Activated B cell treated with CpG ODN at 0.5 μM for 24 hours (primary cell): ENCODE measurements at regions of chr14 and their contacts with region 1.

Region 1: GRCh38 chr14:96741151-96741977 is 55.8 kb upstream of the VRK1 start:
- DNase-seq: peak; percentile 68
- ATAC-seq: peak; percentile 91
- H3K4me3 Mint-ChIP-seq: peak overlapping the region; percentile 65
- H3K27ac Mint-ChIP-seq: no peak overlapping the region
- H3K4me1 Mint-ChIP-seq: peaks cover 11% of the 10 kb centered on the region
- H3K27me3 Mint-ChIP-seq: peaks cover 60% of the 10 kb centered on the region
- CTCF ChIP-seq: peak; percentile 95

Region 2: DNA sequence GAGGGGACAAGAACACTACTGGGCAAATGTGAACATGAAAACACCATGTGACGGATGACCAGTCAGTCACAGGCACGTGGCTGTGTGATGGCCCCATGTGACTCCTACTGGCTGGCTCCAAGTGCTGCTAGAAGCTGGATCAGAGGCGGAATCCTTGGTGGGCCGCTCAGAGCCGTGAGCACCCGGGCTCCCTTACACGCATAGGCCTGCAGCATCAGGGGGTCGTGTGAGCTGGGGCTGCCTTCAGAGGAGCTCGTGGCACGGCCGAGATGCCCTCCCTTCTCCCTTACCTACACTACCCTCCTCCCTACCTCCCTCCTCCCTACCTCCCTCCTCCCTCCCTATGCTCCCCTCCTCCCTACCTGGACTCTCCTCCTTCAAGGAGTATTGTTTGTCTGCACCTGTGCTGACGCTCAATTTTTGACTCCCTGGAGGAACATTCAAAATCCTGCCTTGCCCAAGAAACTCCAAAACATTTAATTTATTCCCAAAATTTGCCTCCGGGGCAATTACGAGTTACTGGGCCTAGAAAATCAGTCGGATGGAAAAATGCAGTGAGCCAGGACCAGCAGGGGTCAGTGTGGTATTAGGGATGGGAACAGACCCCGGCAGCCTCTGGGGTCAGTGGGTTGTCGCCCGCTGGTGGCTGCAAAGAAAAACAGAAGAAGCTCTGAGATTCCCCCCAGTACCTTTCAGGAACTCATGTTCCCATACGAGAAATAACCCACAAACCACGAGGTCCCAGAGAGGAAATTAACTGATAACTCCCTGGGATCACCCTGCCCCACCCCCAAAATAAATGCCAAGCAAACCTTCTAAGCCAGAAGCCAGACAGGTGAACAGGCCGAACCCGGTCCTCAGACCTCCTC is 641.0 kb before region 1 on chr14:
- CTCF ChIA-PET with region 1: no interaction called
- POLR2A ChIA-PET with region 1: no interaction called
- intact Hi-C with region 1: loop called (anchors 5 kb)
- DNase-seq: no peak
- ATAC-seq: no peak
- H3K4me3 Mint-ChIP-seq: no peak overlapping the region
- H3K27ac Mint-ChIP-seq: no peak overlapping the region
- H3K4me1 Mint-ChIP-seq: peaks cover 2% of the 10 kb centered on the region
- H3K27me3 Mint-ChIP-seq: no peaks in the 10 kb centered on the region
- CTCF ChIP-seq: no peak

Region 3: DNA sequence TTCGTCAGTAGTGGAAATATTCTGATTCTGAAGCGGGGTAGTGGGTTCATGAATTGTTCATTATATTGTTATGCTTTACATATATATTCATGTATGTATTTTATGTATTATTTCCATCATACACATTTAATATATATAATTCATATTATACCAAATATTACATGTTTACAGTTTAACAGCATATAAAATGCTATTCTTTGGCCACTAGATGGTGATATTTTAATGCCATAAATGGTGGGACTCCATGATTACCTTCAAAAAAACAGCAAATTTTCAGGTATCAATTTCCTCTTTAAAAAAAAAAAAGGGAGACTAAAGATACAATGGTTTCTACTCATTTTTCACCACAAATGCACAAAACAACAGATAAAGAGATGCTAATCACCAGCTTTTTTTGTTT is 444.4 kb before region 1 on chr14:
- CTCF ChIA-PET with region 1: interaction called, 4 read pairs
- POLR2A ChIA-PET with region 1: no interaction called
- intact Hi-C with region 1: loop called (anchors 5 kb)
- DNase-seq: no peak
- ATAC-seq: no peak
- H3K4me3 Mint-ChIP-seq: no peak overlapping the region
- H3K27ac Mint-ChIP-seq: no peak overlapping the region
- H3K4me1 Mint-ChIP-seq: no peaks in the 10 kb centered on the region
- H3K27me3 Mint-ChIP-seq: no peaks in the 10 kb centered on the region
- CTCF ChIP-seq: no peak

Region 4: DNA sequence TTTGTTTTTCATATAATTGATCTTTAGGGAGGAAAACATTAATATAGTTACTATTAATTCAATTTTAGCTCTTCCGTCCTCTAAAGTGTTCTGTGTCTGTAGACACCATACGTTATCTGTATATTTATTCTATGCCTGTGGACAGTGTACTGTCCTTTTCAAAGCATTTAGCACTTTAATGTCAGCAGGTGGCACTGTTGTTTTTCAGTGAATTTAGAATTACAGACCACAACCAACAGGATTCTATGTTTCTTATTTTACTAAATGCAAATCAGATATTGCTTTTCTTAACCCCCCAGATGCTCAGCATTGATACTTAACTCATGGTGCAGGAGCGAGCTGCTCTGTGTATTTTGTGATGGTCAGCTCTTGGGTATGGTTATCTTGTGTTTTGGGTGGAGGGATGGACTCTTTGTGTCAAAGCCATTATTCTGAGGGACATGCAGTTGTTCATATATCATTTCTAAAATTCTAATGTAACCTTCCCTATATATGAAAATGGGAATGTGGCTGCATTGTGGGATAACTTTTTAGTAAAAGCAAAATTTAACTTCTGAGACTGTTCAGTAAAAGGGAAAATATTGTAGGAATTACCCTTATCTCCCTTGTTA is 174.0 kb before region 1 on chr14:
- CTCF ChIA-PET with region 1: interaction called, 27 read pairs
- POLR2A ChIA-PET with region 1: no interaction called
- intact Hi-C with region 1: loop called (anchors 1 kb)
- DNase-seq: no peak
- ATAC-seq: peak; percentile 42
- H3K4me3 Mint-ChIP-seq: no peak overlapping the region
- H3K27ac Mint-ChIP-seq: no peak overlapping the region
- H3K4me1 Mint-ChIP-seq: peaks cover 3% of the 10 kb centered on the region
- H3K27me3 Mint-ChIP-seq: no peaks in the 10 kb centered on the region
- CTCF ChIP-seq: no peak

Region 5: DNA sequence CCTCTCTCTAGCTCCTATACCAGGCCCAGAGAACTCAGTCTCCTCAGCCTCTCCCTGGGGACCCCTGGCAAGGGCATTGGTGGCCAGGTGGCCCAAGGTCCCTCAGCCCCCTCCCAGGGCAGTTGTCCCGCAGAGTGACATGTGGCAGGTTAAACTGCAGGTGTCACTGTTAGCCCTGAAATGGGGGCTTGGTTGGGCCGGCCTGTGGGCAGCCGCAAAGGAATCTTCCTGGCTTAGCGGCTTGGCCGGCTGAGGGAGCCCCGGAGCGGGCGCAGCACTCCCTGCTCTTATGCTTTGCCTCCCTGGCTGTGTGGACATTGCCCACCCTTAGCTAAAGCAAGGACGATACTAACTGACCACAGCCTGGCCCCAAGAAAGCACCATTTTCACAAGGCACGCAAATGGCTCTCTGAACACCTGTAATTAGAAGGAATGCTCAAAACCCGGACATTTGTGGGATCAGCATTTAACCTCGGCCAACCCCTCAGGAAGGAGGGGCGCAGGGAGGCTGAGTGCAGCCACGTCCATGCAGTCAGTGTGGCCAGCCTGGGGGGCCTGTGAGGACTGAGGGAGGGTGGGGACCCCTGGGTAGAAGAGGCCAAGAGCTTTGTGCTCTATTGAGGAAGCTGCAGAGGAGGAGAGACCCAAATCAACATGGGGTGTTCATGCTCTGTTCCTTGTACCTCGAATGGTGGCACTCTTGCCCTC is 157.0 kb before region 1 on chr14:
- CTCF ChIA-PET with region 1: interaction called, 4 read pairs
- POLR2A ChIA-PET with region 1: no interaction called
- intact Hi-C with region 1: loop called (anchors 5 kb)
- DNase-seq: no peak
- ATAC-seq: peak; percentile 58
- H3K4me3 Mint-ChIP-seq: no peak overlapping the region
- H3K27ac Mint-ChIP-seq: no peak overlapping the region
- H3K4me1 Mint-ChIP-seq: peaks cover 25% of the 10 kb centered on the region
- H3K27me3 Mint-ChIP-seq: peaks cover 34% of the 10 kb centered on the region
- CTCF ChIP-seq: no peak

Region 6: DNA sequence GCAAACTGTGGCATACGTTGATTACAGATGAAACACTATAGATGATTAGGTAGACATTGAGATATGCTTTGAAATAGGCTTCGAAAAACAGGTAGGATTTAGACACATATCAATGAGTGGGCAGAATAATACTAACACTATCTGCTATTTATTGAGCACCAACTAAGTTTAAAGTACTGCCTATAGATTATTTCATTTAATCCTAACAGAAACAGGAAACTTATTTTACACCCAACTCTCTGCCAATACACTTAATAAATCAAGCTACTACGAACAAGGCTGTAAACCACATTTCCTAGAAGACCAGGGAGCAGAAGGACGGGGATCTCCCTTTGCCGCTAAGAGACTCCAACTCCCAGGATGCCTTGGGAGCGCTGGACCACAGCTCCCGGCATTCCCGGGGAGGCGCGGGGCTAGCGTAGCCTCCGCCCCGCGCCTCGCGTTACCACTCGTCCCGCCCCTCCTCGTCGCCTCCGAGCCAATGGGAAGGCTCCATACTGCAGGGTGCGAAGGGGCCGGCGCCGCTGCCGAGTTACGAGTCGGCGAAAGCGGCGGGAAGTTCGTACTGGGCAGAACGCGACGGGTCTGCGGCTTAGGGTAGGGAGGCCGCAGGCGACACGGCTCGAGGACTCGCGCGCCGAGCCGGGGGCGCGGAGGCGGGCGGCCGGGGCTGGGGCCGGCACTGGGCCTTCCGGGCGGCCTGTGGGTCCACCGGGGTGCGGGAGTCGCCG is 55.7 kb after region 1 on chr14 and contains the start of gene VRK1:
- CTCF ChIA-PET with region 1: no interaction called
- POLR2A ChIA-PET with region 1: no interaction called
- intact Hi-C with region 1: no loop called
- DNase-seq: peak; percentile 92
- ATAC-seq: peak; percentile 98
- H3K4me3 Mint-ChIP-seq: peak within 1 kb of the TSS; percentile 87
- H3K27ac Mint-ChIP-seq: peak within 1 kb of the TSS; percentile 74
- H3K4me1 Mint-ChIP-seq: peaks cover 24% of the 10 kb centered on the region
- H3K27me3 Mint-ChIP-seq: peaks cover 18% of the 10 kb centered on the region
- CTCF ChIP-seq: no peak
- total RNA-seq, gene VRK1: 30.2 and 32.1 TPM in 2 replicates

Region 7: DNA sequence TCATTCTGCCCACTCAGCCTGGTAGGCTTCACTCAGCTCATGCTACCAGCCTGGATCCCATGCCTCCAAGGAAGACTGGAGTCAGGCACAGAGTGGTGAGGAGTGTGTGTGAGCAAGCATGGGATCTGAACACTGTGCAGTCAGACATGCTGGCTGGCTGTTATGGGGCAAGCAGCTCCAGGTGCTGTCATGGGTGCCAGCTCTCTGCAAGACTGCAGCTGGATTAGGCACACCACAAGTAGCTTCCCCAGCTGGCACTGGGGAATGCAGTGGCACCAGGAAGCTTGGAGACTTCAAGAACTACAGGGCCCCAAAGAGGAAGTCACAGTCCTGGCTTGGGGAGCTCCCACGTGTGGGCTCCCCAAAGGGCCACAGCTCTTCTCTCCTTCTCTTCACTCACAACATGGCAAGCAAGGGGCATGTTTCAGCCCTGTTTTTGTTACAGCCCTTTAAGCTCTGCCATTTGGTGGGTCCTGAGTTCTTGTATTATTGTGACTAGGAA is 258.3 kb after region 1 on chr14:
- CTCF ChIA-PET with region 1: no interaction called
- POLR2A ChIA-PET with region 1: no interaction called
- intact Hi-C with region 1: no loop called
- DNase-seq: no peak
- ATAC-seq: no peak
- H3K4me3 Mint-ChIP-seq: no peak overlapping the region
- H3K27ac Mint-ChIP-seq: no peak overlapping the region
- H3K4me1 Mint-ChIP-seq: no peaks in the 10 kb centered on the region
- H3K27me3 Mint-ChIP-seq: peaks cover 3% of the 10 kb centered on the region
- CTCF ChIP-seq: no peak